A673 (cell line): ENCODE measurements at regions of chr17 and their contacts with region 1.

Region 1: DNA sequence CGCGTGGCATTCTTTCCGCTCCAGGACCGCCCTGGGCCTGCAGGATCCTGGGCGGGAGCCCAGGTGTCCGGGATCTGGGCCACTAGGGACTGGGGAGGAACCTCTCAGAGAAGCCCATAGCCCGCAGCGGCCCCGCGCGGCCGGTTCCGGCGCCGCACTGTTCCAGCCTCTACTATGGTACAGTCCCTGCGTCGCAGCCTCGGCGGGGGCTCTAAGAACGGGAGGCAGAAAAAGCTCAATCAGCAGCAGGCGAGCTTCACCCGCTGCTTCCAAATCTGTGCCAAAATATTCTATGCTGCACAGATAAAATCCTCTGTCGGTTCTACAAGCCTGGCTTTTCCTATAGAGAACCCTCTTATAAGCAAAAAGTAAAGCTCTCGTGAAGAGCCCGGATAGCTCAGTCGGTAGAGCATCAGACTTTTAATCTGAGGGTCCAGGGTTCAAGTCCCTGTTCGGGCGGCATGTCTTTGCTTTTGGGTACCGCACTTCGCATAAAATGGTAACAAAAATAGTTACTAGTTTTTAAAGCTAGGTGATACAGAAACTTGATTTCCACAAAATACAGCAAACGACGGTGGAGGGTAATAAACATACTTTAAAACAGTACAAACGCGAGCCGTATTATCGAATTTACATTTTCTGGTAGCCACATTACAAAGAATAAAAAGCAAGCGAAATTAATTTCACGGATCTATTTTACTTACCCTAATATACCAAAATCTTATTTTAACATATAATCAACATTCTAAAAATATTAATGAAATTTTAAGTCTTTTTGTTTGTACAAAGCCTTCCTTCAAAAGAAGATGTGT is 661 bp upstream of the ALOXE3 start:
- DNase-seq: peak; percentile 93
- H3K4me3 ChIP-seq: peak overlapping the region; percentile 68
- H3K27ac ChIP-seq: peak overlapping the region; percentile 29
- H3K4me1 ChIP-seq: no peaks in the 10 kb centered on the region
- H3K27me3 ChIP-seq: no peaks in the 10 kb centered on the region
- CTCF ChIP-seq: peak; percentile 99

Region 2: DNA sequence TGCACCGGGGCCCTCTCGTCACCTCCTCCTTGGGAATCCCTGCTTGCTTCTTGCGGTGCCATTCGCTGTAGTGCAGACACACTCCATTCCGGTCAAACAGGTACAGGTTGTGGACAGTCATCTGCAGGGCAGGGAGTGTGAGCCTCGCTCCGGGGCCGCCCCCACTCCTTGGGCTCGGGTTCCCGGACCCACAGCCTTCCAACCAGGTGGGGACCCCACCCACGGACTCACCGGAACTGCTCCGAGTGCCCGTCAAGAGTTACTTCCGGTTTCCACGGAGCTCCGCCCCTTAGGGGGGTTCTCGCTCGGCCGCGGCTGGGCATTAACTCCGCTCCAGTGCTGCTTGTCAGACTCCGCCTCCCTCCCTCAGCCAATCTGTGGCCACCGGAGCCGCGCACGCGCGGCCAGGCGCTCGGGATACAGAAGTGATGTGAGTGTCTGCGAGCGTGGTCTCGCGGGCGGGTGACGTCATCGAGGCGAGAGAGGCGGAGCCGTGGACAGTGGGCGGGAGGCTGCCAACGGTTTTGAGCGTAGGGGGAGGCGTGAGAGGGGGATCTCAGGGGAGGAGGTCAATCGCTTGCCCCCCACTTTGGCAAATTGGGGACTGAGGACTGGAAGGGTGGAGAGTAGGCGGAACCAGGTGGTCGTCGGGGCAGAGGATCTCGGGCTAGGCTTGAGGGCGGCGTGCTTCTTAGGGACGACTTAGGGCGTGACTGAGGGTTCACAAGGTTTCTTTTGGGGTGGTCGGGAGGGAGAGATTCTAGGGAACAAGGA is 187.1 kb before region 1 on chr17 and contains the starts of genes CNTROB and TRAPPC1:
- CTCF ChIA-PET with region 1: no interaction called
- POLR2A ChIA-PET with region 1: no interaction called
- intact Hi-C with region 1: loop called (anchors 5 kb)
- DNase-seq: peak; percentile 100
- H3K4me3 ChIP-seq: peak within 1 kb of the TSS; percentile 68
- H3K27ac ChIP-seq: peak within 1 kb of the TSS; percentile 88
- H3K4me1 ChIP-seq: peaks cover 23% of the 10 kb centered on the region
- H3K27me3 ChIP-seq: no peaks in the 10 kb centered on the region
- CTCF ChIP-seq: no peak
- total RNA-seq, gene CNTROB: 72.3 and 79.9 TPM in 2 replicates
- total RNA-seq, gene TRAPPC1: 111 and 140 TPM in 2 replicates

Region 3: DNA sequence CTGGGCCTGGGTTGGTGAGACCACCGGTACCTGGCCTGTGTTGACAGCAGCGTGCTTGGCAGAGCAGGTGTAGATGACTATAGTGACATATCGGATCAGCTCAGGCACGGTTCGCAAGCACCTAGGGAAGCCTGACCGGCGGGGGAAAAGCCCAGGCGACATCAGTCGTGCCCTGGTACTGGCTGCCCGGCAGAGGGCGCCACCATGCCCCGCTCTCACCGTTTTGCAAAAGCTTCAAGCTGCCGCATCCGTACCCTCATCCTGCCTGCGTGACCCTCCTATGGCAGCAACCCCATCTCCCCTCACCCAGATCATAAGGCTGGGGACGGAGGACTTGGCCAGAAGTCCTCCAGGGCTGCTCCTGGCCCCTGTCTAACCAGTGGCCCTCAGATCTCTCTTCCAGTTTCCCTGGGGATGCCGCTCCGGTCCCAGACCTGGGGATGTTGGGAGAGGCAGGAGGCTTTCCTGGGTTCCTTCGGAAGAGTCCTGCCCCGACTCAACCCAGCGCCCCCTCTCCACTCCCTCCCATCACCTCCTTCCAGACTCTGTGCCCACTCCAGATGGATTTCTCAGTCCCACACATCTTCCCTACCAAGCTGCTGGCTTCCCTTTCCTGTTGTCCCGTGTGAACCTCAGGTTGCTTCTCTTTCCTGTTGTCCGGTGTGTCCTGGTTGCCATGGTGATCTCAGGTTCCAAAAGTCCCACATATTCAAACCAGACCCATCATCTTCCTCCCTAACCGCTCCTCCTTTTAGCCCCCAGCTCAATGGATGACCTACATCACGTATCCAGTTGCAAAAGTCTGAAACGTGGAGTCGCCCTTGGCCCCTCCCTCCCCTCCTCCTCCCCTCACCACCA is 45.1 kb before region 1 on chr17:
- CTCF ChIA-PET with region 1: interaction called, 12 read pairs
- POLR2A ChIA-PET with region 1: no interaction called
- intact Hi-C with region 1: no loop called
- DNase-seq: peak; percentile 79
- H3K4me3 ChIP-seq: peak overlapping the region; percentile 20
- H3K27ac ChIP-seq: no peak overlapping the region
- H3K4me1 ChIP-seq: peaks cover 5% of the 10 kb centered on the region
- H3K27me3 ChIP-seq: peaks cover 31% of the 10 kb centered on the region
- CTCF ChIP-seq: peak; percentile 97

Region 4: GRCh38 chr17:8091033-8091687 is 27.8 kb before region 1 on chr17:
- CTCF ChIA-PET with region 1: interaction called, 12 read pairs
- POLR2A ChIA-PET with region 1: interaction called, 25 read pairs
- intact Hi-C with region 1: no loop called
- DNase-seq: no peak
- H3K4me3 ChIP-seq: no peak overlapping the region
- H3K27ac ChIP-seq: no peak overlapping the region
- H3K4me1 ChIP-seq: no peaks in the 10 kb centered on the region
- H3K27me3 ChIP-seq: peaks cover 14% of the 10 kb centered on the region
- CTCF ChIP-seq: no peak

Region 5: DNA sequence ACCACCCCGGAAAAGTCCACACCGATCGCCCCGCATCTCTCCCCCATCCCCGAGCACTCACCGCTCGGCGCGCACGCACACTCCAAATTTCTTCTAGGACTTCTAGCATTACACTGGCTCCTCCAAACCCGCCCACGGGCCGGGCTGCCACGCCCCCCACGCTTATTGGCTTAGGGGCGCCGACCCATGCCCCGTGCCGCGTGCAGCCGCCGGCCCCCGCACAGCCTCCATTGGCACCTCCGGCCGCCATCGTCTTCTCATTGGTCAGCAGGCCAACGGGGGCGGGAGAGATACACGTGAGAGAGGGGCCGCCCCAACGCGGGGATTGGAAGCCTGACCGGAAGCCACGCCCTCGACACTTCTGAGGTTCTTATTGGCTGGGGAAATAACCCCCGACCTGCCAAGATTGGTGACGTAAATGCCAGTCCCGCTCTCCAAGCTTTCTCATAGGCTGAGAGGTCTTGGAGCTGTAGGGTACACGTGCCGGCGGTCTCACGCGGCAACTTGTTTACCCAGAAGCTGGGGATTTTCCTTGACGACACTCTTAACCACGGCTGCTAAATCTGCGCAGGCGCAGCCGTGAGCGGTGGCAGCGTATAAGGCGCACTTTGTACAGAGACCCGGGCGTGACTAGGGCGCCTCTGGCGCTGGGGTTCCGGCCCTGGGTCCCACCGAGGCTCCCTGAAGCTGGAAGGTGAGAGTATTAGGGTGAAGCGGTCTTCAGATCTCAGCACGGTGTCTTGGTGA is 37.4 kb after region 1 on chr17:
- CTCF ChIA-PET with region 1: interaction called, 5 read pairs
- POLR2A ChIA-PET with region 1: no interaction called
- intact Hi-C with region 1: loop called (anchors 2 kb)
- DNase-seq: peak; percentile 100
- H3K4me3 ChIP-seq: peak overlapping the region; percentile 52
- H3K27ac ChIP-seq: peak overlapping the region; percentile 97
- H3K4me1 ChIP-seq: peaks cover 46% of the 10 kb centered on the region
- H3K27me3 ChIP-seq: no peaks in the 10 kb centered on the region
- CTCF ChIP-seq: 0 out of 2 replicates have a peak, but pooled peaks have one; percentile 34

Region 6: GRCh38 chr17:8186787-8187516 is 68.0 kb after region 1 on chr17:
- CTCF ChIA-PET with region 1: no interaction called
- POLR2A ChIA-PET with region 1: no interaction called
- intact Hi-C with region 1: loop called (anchors 1 kb)
- DNase-seq: peak; percentile 98
- H3K4me3 ChIP-seq: peak overlapping the region; percentile 82
- H3K27ac ChIP-seq: peak overlapping the region; percentile 85
- H3K4me1 ChIP-seq: peaks cover 21% of the 10 kb centered on the region
- H3K27me3 ChIP-seq: no peaks in the 10 kb centered on the region
- CTCF ChIP-seq: peak; percentile 49

Region 7: DNA sequence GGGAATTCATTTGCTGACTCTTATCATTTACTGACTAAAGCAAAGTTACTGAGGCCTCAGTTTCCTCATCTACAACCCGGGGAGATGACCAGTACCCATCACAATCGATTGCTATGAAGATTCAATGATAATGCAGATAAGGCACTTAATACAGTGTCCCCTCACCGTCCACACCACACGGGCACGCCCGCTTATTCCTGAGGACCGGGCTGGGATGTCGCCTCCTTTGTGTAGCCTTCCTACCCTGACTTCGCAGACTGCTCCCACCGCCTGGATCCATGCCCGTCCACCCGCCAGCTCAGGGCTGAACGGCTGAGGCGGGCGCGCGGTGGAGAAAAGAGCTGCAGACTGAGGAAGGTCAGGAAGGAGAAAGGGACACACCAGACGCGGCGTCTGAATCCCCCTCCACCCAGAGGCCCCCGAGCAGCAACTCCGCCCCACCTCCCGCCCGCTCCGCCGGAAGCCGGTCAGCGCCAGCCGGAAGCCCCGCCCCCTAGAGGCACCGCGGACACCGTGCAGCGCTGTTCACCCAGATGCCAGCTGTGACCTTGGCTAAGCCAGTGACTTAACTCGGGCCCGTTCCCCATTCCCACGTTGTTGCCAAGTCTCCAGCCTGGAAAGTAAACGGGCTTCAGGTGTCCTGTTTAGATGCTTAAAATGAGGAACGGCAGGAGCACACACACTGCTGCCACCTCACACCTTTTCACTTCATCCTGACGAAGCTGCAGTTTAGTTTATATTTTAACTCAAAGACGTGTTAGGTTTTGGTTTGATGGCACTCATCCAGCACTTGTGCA is 257.5 kb after region 1 on chr17 and contains the start of gene KRABD2:
- CTCF ChIA-PET with region 1: no interaction called
- POLR2A ChIA-PET with region 1: no interaction called
- intact Hi-C with region 1: loop called (anchors 5 kb)
- DNase-seq: peak; percentile 94
- H3K4me3 ChIP-seq: peak within 1 kb of the TSS; percentile 92
- H3K27ac ChIP-seq: peak within 1 kb of the TSS; percentile 91
- H3K4me1 ChIP-seq: peaks cover 42% of the 10 kb centered on the region
- H3K27me3 ChIP-seq: no peaks in the 10 kb centered on the region
- CTCF ChIP-seq: peak; percentile 74